Aorta (tissue), 5 donors: ENCODE measurements at regions of chr22 and their contacts with region 1.

Region 1: DNA sequence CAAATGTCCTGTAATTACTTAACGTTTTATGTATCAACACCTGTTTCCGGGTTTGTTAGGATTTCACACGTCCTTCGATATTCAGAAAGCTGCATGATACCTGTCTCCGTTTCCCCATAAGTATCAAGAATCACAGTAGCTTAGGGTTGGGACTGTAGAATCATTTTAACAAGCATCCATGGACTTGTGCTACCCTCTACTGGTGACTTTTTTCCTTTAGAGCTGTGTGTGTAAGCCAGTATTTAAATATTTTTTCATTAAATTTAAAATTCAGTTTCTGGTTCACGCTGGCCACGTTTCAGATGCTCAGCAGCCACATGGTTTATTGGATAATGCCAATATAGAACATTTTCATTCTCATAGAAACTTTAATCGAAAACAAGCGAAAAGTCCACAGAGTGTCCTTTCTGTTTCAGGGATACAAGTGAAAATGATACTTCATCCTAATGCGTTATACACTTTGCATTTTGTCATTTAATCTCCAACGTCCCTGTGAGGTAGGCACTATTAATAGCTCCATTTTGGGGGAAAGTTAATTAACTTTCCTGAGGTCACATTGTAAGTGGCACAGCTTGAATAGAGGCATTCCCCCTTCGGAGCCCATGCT is 61.5 kb upstream of the SLC25A18 start:
- DNase-seq: no peak
- ATAC-seq: no peak
- H3K4me3 ChIP-seq: no peak overlapping the region
- H3K27ac ChIP-seq: no peak overlapping the region
- H3K4me1 ChIP-seq: no peaks in the 10 kb centered on the region
- H3K27me3 ChIP-seq: no peaks in the 10 kb centered on the region

Region 2: GRCh38 chr22:17074648-17075002 is 427.2 kb before region 1 on chr22:
- intact Hi-C with region 1: loop called (anchors 2 to 5 kb)
- DNase-seq: no peak
- ATAC-seq: no peak
- H3K4me3 ChIP-seq: no peak overlapping the region
- H3K27ac ChIP-seq: no peak overlapping the region
- H3K4me1 ChIP-seq: no peaks in the 10 kb centered on the region
- H3K27me3 ChIP-seq: no peaks in the 10 kb centered on the region

Region 3: GRCh38 chr22:18001040-18001893 is 499.5 kb after region 1 on chr22:
- intact Hi-C with region 1: no loop called
- DNase-seq: peak; percentile 94 to 96
- ATAC-seq: peak; percentile 97
- H3K4me3 ChIP-seq: peak overlapping the region; percentile 85 to 99
- H3K27ac ChIP-seq: peak overlapping the region in 1 of 2 donors; percentile 81
- H3K4me1 ChIP-seq: no peaks in the 10 kb centered on the region
- H3K27me3 ChIP-seq: no peaks in the 10 kb centered on the region